IMR-90 (cell line): ENCODE measurements at regions of chr17 and their contacts with region 1.

Region 1: DNA sequence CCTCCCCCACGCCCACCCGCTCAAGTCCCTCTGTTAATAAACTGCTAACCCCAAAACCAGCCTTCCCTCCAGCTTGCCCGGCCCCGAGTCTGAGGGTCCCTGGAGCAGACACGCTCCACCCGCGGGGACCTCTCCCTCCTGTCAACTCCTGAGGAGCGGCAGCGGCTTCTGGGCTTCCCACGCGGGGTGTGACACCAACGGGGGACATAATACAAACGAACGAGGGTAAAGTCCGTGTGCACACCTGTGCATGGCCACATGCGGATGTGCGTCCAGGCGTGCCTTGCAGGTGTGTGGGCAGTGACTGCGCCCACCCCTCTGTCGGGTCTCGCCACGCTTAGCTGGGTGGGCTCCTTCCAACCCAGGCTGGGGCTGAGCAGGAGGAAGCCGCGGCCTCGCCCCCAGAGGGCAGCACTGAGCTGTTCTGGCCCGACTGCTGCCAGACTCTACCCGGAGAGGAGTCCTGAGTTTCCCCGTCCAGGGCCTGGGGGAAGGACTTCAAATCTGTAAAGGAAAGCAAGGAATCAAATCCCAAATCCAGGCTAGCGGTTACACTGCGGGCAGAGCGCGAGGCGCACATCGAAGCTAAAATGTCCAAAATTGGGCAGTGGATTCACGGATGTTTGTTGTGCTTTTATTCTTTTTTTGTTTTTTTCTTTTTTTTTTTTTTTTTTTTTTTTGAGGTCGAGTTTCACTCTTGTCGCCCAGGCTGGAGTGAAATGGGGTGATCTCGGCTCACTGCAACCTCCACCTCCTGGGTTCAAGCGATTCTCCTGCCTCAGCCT is 24.2 kb upstream of the KRT17 start:
- DNase-seq: peak; percentile 77
- ATAC-seq: peak; percentile 92
- H3K4me3 ChIP-seq: 0 out of 2 replicates have a peak overlapping the region, but pooled peaks have one; percentile 9
- H3K27ac ChIP-seq: peak overlapping the region; percentile 79
- H3K4me1 ChIP-seq: peaks cover 14% of the 10 kb centered on the region
- H3K27me3 ChIP-seq: no peaks in the 10 kb centered on the region; the same call in 1 of the 2 replicates
- CTCF ChIP-seq: peak; percentile 84
- POLR2A ChIP-seq: no peak
- RAD21 ChIP-seq: peak; percentile 57

Region 2: GRCh38 chr17:40803617-40804082 is 845.0 kb before region 1 on chr17:
- CTCF ChIA-PET with region 1: no interaction called
- POLR2A ChIA-PET with region 1: no interaction called
- dilution Hi-C with region 1: no loop called
- in situ Hi-C with region 1: no loop called
- intact Hi-C with region 1: loop called (anchors 5 kb)
- DNase-seq: peak; percentile 66
- ATAC-seq: peak; percentile 100
- H3K4me3 ChIP-seq: no peak overlapping the region
- H3K27ac ChIP-seq: no peak overlapping the region
- H3K4me1 ChIP-seq: no peaks in the 10 kb centered on the region
- H3K27me3 ChIP-seq: peaks cover 25% of the 10 kb centered on the region
- CTCF ChIP-seq: peak; percentile 92
- POLR2A ChIP-seq: peak; percentile 42; the same call in 1 of the 2 replicates
- RAD21 ChIP-seq: peak; percentile 95

Region 3: DNA sequence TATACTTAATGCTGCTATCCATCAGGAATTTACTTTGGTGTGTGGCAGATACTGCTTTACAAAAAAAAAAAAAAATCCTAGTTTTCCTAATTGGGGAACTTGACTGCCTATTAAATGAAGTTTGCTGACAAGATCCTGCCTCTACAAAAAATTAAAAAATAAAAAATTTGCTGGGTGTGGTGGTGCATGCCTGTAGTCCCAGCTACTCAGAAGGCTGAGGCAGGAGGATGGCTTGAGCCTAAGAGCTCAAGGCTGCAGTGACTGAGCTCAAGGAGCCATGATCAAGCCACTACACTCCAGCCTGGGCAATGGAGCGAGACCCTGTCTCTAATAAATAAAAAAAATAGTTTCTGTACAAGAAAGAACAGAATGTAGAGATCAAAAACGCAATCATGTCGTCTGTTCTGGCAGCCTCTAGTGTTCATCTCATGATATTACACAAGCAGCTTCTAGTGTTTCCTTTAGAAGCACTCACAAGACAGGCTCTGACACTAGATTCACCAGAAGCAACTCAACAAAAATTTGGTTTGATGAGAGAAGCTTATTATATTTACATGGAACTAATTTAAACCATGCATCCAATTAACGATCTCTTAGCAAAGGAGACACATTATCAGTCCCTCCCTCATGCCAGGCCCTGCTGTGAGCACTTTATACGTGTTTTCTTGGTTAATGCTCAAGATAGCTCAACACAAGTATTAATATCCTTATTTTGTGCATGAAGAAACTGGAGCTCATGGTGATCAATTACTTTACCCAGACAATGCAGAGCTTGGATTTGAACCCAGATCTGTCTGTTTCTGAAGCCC is 326.3 kb before region 1 on chr17:
- CTCF ChIA-PET with region 1: no interaction called
- POLR2A ChIA-PET with region 1: no interaction called
- dilution Hi-C with region 1: no loop called
- in situ Hi-C with region 1: no loop called
- intact Hi-C with region 1: loop called (anchors 5 kb)
- DNase-seq: peak; percentile 79
- ATAC-seq: peak; percentile 97
- H3K4me3 ChIP-seq: no peak overlapping the region
- H3K27ac ChIP-seq: peak overlapping the region; percentile 51; the same call in 1 of the 2 replicates
- H3K4me1 ChIP-seq: peaks cover 2% of the 10 kb centered on the region
- H3K27me3 ChIP-seq: no peaks in the 10 kb centered on the region
- CTCF ChIP-seq: peak; percentile 80
- POLR2A ChIP-seq: no peak
- RAD21 ChIP-seq: peak; percentile 81

Region 4: GRCh38 chr17:41538565-41538991 is 110.0 kb before region 1 on chr17:
- CTCF ChIA-PET with region 1: no interaction called
- POLR2A ChIA-PET with region 1: no interaction called
- dilution Hi-C with region 1: no loop called
- in situ Hi-C with region 1: no loop called
- intact Hi-C with region 1: no loop called
- DNase-seq: peak; percentile 59
- ATAC-seq: peak; percentile 88
- H3K4me3 ChIP-seq: no peak overlapping the region
- H3K27ac ChIP-seq: peak overlapping the region; percentile 21
- H3K4me1 ChIP-seq: peaks cover 16% of the 10 kb centered on the region
- H3K27me3 ChIP-seq: no peaks in the 10 kb centered on the region
- CTCF ChIP-seq: no peak
- POLR2A ChIP-seq: no peak
- RAD21 ChIP-seq: no peak

Region 5: GRCh38 chr17:41593311-41593981 is 55.2 kb before region 1 on chr17:
- CTCF ChIA-PET with region 1: no interaction called
- POLR2A ChIA-PET with region 1: no interaction called
- dilution Hi-C with region 1: no loop called
- in situ Hi-C with region 1: no loop called
- intact Hi-C with region 1: no loop called
- DNase-seq: no peak
- ATAC-seq: no peak
- H3K4me3 ChIP-seq: no peak overlapping the region
- H3K27ac ChIP-seq: no peak overlapping the region
- H3K4me1 ChIP-seq: no peaks in the 10 kb centered on the region
- H3K27me3 ChIP-seq: peaks cover 67% of the 10 kb centered on the region
- CTCF ChIP-seq: no peak
- POLR2A ChIP-seq: no peak
- RAD21 ChIP-seq: no peak

Region 6: DNA sequence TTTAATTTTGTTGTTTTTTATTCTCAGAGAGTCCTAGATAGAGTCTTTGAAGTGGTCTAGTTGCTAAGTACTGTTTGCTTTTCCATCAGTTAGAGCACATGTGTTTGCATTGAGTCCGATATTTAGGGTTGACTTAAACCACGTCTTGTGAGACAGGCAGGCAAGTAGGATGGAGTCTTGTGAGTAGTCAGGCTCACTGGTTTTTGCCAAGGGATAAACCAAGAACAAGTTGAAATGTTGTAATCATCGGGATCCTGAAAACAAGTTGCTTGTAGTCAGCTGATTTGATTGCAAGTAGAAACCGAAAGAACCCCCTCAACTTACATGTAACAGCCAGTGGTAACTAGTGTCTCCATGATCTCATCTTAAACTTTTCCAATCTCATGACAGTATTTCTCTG is 827.2 kb after region 1 on chr17:
- CTCF ChIA-PET with region 1: no interaction called
- POLR2A ChIA-PET with region 1: no interaction called
- dilution Hi-C with region 1: no loop called
- in situ Hi-C with region 1: no loop called
- intact Hi-C with region 1: no loop called
- DNase-seq: no peak
- ATAC-seq: no peak
- H3K4me3 ChIP-seq: no peak overlapping the region
- H3K27ac ChIP-seq: no peak overlapping the region
- H3K4me1 ChIP-seq: no peaks in the 10 kb centered on the region; the same call in 1 of the 2 replicates
- H3K27me3 ChIP-seq: no peaks in the 10 kb centered on the region
- CTCF ChIP-seq: no peak
- POLR2A ChIP-seq: no peak
- RAD21 ChIP-seq: no peak